Activated CD4-positive, alpha-beta memory T cell treated with anti-CD3 and anti-CD28 coated beads for 36 hours (primary cell): ENCODE measurements at regions of chr1 and their contacts with region 1.

Region 1: GRCh38 chr1:9717193-9718005 is 65.9 kb downstream of the PIK3CD start:
- DNase-seq: peak; percentile 95
- H3K4me3 Mint-ChIP-seq: peak overlapping the region; percentile 87
- H3K27ac Mint-ChIP-seq: peak overlapping the region; percentile 94
- H3K4me1 Mint-ChIP-seq: peaks cover 61% of the 10 kb centered on the region
- H3K27me3 Mint-ChIP-seq: no peaks in the 10 kb centered on the region

Region 2: GRCh38 chr1:9466780-9467758 is 250.3 kb before region 1 on chr1:
- CTCF ChIA-PET with region 1: no interaction called
- POLR2A ChIA-PET with region 1: no interaction called
- intact Hi-C with region 1: no loop called
- DNase-seq: no peak
- H3K4me3 Mint-ChIP-seq: no peak overlapping the region
- H3K27ac Mint-ChIP-seq: no peak overlapping the region
- H3K4me1 Mint-ChIP-seq: no peaks in the 10 kb centered on the region
- H3K27me3 Mint-ChIP-seq: peaks cover 24% of the 10 kb centered on the region

Region 3: GRCh38 chr1:9671377-9672140 is 45.8 kb before region 1 on chr1:
- CTCF ChIA-PET with region 1: interaction called, 6 read pairs
- POLR2A ChIA-PET with region 1: interaction called, 4 read pairs
- intact Hi-C with region 1: loop called (anchors 5 kb)
- DNase-seq: peak; percentile 56
- H3K4me3 Mint-ChIP-seq: peak overlapping the region; percentile 28
- H3K27ac Mint-ChIP-seq: peak overlapping the region; percentile 92
- H3K4me1 Mint-ChIP-seq: peaks cover 58% of the 10 kb centered on the region
- H3K27me3 Mint-ChIP-seq: no peaks in the 10 kb centered on the region

Region 4: DNA sequence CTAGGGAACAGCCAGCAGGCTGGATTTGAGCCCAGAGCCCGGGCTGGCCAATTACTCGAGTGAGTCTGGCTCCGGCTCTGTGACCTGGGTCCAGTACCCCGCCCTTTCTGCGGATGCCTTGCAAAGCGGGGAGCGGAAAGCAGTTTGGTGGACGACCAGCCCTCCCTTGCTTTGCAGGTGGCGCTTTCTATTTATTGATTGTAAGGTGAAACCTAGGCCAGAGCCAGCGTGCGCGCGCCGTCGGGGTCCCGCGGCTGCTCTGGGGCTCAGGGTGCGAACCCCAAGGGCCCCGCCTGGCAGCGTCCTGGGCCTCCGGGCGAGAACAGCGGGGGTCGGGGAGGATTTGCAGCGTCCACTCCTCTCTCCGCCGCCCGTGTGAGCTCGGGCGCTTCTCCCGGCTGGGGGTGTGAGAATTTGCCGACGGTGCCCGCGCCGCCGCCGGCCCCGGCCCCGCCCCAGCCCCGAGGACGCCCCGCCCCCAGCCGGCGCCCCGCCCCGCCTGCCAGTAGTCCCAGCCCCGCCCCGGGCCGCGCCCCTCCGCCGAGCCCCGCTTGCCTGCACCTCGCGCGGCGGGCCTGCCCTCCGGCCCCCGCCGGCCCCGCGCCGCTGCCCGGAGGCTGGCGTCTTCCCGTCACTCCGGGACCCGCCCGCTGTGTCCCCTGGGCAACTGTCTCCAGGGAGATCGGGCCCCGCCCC is 28.2 kb before region 1 on chr1:
- CTCF ChIA-PET with region 1: interaction called, 10 read pairs
- POLR2A ChIA-PET with region 1: no interaction called
- intact Hi-C with region 1: loop called (anchors 2 kb)
- DNase-seq: peak; percentile 85
- H3K4me3 Mint-ChIP-seq: peak overlapping the region; percentile 64
- H3K27ac Mint-ChIP-seq: no peak overlapping the region
- H3K4me1 Mint-ChIP-seq: peaks cover 70% of the 10 kb centered on the region
- H3K27me3 Mint-ChIP-seq: no peaks in the 10 kb centered on the region

Region 5: GRCh38 chr1:9910425-9911178 is 193.2 kb after region 1 on chr1:
- CTCF ChIA-PET with region 1: no interaction called
- POLR2A ChIA-PET with region 1: no interaction called
- intact Hi-C with region 1: loop called (anchors 5 kb)
- DNase-seq: peak; percentile 100
- H3K4me3 Mint-ChIP-seq: peak overlapping the region; percentile 94
- H3K27ac Mint-ChIP-seq: peak overlapping the region; percentile 94
- H3K4me1 Mint-ChIP-seq: peaks cover 28% of the 10 kb centered on the region
- H3K27me3 Mint-ChIP-seq: no peaks in the 10 kb centered on the region